Endothelial cell of umbilical vein (primary cell): ENCODE measurements at regions of chr3 and their contacts with region 1.

Region 1: DNA sequence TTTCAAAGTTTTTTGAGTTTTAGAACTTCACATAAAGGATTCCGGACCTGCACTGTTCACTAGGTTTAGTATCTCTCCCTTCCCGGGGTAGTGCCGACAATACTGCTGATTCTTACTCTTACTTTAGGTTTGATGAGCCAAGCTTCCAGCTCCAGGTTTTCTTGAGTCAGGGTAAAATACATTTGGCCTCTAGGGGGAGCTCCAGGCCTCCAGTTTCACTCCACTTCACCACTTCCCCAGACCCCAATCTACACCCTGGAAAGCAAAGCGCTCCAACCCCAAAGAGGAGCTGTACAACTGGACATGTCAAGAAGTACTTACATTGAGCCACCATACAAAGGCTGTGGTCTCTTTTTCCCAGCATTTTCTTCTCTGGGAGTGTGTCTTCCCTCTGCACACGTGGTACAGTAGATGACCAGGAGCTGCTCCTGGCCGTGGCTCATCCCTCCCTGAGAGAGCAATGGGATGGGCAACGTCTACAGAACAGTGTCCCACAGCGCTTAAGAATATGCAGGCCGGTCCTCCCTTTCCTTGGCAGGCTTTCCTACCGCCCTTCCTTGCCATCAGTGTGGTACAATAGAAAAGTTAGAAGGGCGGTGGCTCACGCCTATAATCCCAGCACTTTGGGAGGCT is 93.9 kb upstream of the CCDC80 start:
- DNase-seq: peak; percentile 77
- H3K4me3 ChIP-seq: no peak overlapping the region
- H3K27ac ChIP-seq: no peak overlapping the region
- H3K4me1 ChIP-seq: no peaks in the 10 kb centered on the region
- H3K27me3 ChIP-seq: no peaks in the 10 kb centered on the region
- CTCF ChIP-seq: peak; percentile 79 to 80
- POLR2A ChIP-seq: no peak

Region 2: DNA sequence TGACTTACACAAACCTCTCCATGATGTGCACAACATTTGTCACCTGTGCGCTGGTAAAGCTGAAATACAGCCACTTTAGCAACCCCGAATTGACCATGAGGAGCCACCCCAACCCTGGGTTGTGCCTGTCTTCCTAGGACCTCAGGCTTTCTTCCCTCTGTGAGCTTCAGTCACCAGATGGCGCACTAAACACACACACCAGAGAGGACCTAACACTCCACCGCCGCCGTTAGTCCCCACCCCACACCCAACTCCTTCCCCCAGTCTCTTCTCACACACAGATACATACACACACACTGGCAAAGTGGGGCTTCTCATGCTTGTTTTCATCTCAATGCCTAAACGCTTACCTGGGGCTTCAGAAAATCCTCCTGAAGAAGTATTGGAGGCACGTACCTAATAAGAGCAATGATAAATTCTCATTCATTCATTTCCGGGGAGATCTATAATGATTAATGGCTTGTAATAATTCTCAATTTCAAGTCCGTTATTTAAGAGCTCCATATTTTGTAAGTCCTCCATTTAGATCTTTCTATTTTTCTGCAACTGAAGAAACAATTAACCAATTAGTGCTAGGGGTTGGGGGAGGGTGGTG is 91.8 kb before region 1 on chr3:
- CTCF ChIA-PET with region 1: interaction called, 36 read pairs
- POLR2A ChIA-PET with region 1: interaction called, 5 read pairs
- dilution Hi-C with region 1: no loop called
- intact Hi-C with region 1: loop called (anchors 1 kb)
- DNase-seq: peak; percentile 83
- H3K4me3 ChIP-seq: peak overlapping the region in 1 of 3 experiments; percentile 12
- H3K27ac ChIP-seq: no peak overlapping the region
- H3K4me1 ChIP-seq: peaks cover 28% of the 10 kb centered on the region
- H3K27me3 ChIP-seq: no peaks in the 10 kb centered on the region
- CTCF ChIP-seq: peak; percentile 82 to 86
- POLR2A ChIP-seq: no peak

Region 3: DNA sequence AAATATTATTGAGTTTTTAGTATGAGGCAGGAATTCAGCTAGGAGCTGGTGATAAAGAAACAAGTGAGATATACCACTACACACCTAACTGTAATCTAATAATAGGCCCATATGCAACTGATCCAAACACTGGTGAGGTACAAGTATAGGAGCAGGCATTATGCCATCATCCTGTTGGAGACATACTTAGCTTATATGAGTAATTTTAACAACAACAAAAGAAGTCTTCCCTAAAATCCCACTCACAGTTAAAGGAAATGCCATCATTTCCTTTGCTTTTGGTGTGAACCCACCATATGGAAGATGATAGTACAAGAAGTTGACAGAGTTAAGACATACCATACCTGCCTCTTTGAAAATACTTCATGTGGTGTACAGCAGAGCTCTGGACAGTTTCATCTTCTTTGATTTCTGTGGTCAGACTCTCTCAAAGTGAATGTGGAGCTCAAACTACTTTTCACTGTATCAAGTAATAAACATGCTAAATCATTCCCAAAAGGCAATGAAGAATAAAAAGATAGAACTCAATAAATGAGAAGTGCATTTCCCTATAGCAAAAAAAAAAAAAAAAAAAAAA is 26.3 kb after region 1 on chr3:
- CTCF ChIA-PET with region 1: interaction called, 20 read pairs
- POLR2A ChIA-PET with region 1: no interaction called
- dilution Hi-C with region 1: no loop called
- intact Hi-C with region 1: no loop called
- DNase-seq: peak; percentile 79
- H3K4me3 ChIP-seq: no peak overlapping the region
- H3K27ac ChIP-seq: peak overlapping the region; percentile 31
- H3K4me1 ChIP-seq: peaks cover 16% of the 10 kb centered on the region
- H3K27me3 ChIP-seq: no peaks in the 10 kb centered on the region
- CTCF ChIP-seq: no peak
- POLR2A ChIP-seq: no peak

Region 4: GRCh38 chr3:112814266-112814665 is 79.4 kb after region 1 on chr3:
- CTCF ChIA-PET with region 1: interaction called, 55 read pairs
- POLR2A ChIA-PET with region 1: no interaction called
- dilution Hi-C with region 1: no loop called
- intact Hi-C with region 1: loop called (anchors 1 kb)
- DNase-seq: peak; percentile 67
- H3K4me3 ChIP-seq: no peak overlapping the region
- H3K27ac ChIP-seq: no peak overlapping the region
- H3K4me1 ChIP-seq: no peaks in the 10 kb centered on the region
- H3K27me3 ChIP-seq: peaks cover 0 to 7% of the 10 kb centered on the region in 2 experiments
- CTCF ChIP-seq: peak in 1 of 2 donors; percentile 40
- POLR2A ChIP-seq: no peak

Region 5: GRCh38 chr3:112979240-112979832 is 244.5 kb after region 1 on chr3:
- CTCF ChIA-PET with region 1: interaction called, 184 read pairs
- POLR2A ChIA-PET with region 1: no interaction called
- dilution Hi-C with region 1: no loop called
- intact Hi-C with region 1: loop called (anchors 1 kb)
- DNase-seq: peak; percentile 48
- H3K4me3 ChIP-seq: no peak overlapping the region
- H3K27ac ChIP-seq: no peak overlapping the region
- H3K4me1 ChIP-seq: no peaks in the 10 kb centered on the region
- H3K27me3 ChIP-seq: peaks cover 3 to 13% of the 10 kb centered on the region in 2 experiments
- CTCF ChIP-seq: peak; percentile 34 to 36
- POLR2A ChIP-seq: no peak

Region 6: GRCh38 chr3:113035387-113035982 is 300.7 kb after region 1 on chr3:
- CTCF ChIA-PET with region 1: interaction called, 10 read pairs
- POLR2A ChIA-PET with region 1: no interaction called
- dilution Hi-C with region 1: no loop called
- intact Hi-C with region 1: no loop called
- DNase-seq: peak; percentile 47
- H3K4me3 ChIP-seq: no peak overlapping the region
- H3K27ac ChIP-seq: no peak overlapping the region
- H3K4me1 ChIP-seq: no peaks in the 10 kb centered on the region
- H3K27me3 ChIP-seq: no peaks in the 10 kb centered on the region
- CTCF ChIP-seq: peak; percentile 73 to 83
- POLR2A ChIP-seq: no peak